ENCODE measurements at regions of chr3 and their contacts with region 1.

Region 1: GRCh38 chr3:16550676-16551341 is 37.3 kb upstream of the RFTN1 start:
- DNase-seq: peak; percentile 88
- ATAC-seq: peak; percentile 97
- H3K4me3 ChIP-seq: no peak overlapping the region
- H3K27ac ChIP-seq: no peak overlapping the region
- H3K4me1 ChIP-seq: no peaks in the 10 kb centered on the region; the same call in 1 of the 2 replicates
- H3K27me3 ChIP-seq: peaks cover 18% of the 10 kb centered on the region
- CTCF ChIP-seq: peak; percentile 98
- POLR2A ChIP-seq: no peak
- RAD21 ChIP-seq: peak; percentile 98

Region 2: GRCh38 chr3:15595955-15596354 is 954.9 kb before region 1 on chr3:
- CTCF ChIA-PET with region 1: no interaction called
- POLR2A ChIA-PET with region 1: no interaction called
- dilution Hi-C with region 1: no loop called
- in situ Hi-C with region 1: no loop called
- intact Hi-C with region 1: loop called (anchors 5 kb)
- DNase-seq: no peak
- ATAC-seq: no peak
- H3K4me3 ChIP-seq: no peak overlapping the region
- H3K27ac ChIP-seq: no peak overlapping the region
- H3K4me1 ChIP-seq: peaks cover 2% of the 10 kb centered on the region; the same call in 1 of the 2 replicates
- H3K27me3 ChIP-seq: no peaks in the 10 kb centered on the region
- CTCF ChIP-seq: no peak
- POLR2A ChIP-seq: no peak
- RAD21 ChIP-seq: no peak

Region 3: DNA sequence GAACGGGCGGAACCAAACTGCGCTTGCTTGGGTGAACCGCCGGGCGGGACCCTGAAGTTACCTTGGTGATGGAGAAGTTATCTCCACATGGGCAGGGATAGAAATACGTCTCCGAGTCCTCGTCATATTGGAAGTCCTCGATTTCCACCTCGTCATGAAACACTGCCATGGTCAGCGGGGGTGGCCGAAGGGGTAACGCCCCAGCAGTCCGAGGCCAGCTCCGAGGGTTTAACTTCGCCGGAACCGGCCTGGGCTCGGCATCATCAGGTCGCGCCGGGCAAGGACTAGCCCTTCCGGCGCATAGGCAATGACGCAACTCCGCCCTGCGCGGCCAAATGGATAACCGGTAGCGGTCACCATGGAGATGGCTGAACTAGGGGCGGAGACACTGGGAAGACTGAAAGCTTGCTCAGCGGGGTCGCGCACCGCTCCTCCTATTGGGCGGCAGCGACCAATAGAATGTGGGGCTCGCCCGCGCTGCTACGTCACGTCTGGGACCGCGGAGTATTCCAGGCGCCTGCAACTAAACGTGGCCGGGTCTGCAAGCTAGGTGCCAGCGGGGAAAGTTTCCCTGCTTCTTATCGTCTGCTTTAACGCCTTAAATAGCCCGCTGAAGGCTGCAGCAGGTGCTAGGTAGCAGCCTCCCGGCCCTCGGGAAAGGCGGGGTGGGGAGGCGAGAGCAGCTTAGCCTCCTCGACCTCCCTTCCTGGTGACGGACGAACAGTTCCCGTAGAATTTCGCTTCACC is 285.9 kb before region 1 on chr3 and contains the starts of genes DPH3 and OXNAD1:
- CTCF ChIA-PET with region 1: interaction called, 4 read pairs
- POLR2A ChIA-PET with region 1: no interaction called
- dilution Hi-C with region 1: no loop called
- in situ Hi-C with region 1: no loop called
- intact Hi-C with region 1: loop called (anchors 1 kb)
- DNase-seq: peak; percentile 100
- ATAC-seq: peak; percentile 98
- H3K4me3 ChIP-seq: peak within 1 kb of the TSS; percentile 81
- H3K27ac ChIP-seq: peak within 1 kb of the TSS; percentile 72
- H3K4me1 ChIP-seq: no peaks in the 10 kb centered on the region
- H3K27me3 ChIP-seq: no peaks in the 10 kb centered on the region
- CTCF ChIP-seq: no peak
- POLR2A ChIP-seq: peak; percentile 87
- RAD21 ChIP-seq: no peak
- total RNA-seq, gene DPH3: 32.1 and 34.4 TPM in 2 replicates
- total RNA-seq, gene OXNAD1: 11.1 and 11.3 TPM in 2 replicates

Region 4: DNA sequence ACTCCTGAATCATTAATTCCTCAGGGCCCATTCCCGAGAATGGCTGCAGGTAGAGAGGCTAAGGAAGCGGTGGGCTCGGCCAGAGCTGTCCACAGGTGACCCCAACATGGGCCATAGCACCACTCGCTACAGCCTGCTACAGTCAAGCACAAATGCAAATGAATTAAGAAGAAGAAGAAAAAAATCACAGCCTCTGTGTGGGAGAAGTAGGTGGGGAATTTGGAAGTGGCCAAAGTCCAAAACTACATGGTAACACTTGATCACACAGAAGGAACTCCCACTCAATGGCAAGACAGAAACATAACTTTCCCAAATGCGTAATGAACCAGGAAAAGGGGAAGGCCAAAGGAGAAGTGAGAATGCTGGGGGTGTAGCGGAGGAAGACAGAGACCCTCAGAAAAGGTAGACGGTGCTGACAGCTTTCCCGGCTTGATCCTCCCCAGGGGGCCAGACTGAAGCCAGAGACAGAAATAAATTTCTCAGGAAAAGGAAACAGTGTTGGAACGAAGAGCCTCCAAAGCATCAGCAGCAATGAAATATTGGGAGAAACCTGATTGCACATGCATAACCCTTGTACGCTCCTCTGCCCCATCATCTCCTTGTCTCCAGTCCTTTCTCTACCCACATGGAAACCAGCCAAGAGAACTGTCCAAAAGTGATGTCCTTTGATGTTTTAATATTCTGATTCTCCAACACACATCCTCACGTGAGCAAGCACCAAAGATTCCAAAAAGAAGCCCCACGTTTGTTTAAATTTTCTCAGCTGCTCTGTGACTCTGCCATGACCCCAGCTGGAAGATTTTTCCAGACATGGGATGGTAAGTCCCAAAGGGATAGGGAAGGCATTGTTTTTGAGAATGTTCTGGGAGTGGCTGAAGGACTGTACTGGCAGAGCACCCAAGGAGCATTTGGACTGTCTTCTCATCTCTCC is 178.2 kb before region 1 on chr3:
- CTCF ChIA-PET with region 1: interaction called, 15 read pairs
- POLR2A ChIA-PET with region 1: no interaction called
- dilution Hi-C with region 1: no loop called
- in situ Hi-C with region 1: no loop called
- intact Hi-C with region 1: no loop called
- DNase-seq: no peak
- ATAC-seq: no peak
- H3K4me3 ChIP-seq: no peak overlapping the region
- H3K27ac ChIP-seq: no peak overlapping the region
- H3K4me1 ChIP-seq: peaks cover 20% of the 10 kb centered on the region
- H3K27me3 ChIP-seq: no peaks in the 10 kb centered on the region
- CTCF ChIP-seq: no peak
- POLR2A ChIP-seq: no peak
- RAD21 ChIP-seq: no peak

Region 5: DNA sequence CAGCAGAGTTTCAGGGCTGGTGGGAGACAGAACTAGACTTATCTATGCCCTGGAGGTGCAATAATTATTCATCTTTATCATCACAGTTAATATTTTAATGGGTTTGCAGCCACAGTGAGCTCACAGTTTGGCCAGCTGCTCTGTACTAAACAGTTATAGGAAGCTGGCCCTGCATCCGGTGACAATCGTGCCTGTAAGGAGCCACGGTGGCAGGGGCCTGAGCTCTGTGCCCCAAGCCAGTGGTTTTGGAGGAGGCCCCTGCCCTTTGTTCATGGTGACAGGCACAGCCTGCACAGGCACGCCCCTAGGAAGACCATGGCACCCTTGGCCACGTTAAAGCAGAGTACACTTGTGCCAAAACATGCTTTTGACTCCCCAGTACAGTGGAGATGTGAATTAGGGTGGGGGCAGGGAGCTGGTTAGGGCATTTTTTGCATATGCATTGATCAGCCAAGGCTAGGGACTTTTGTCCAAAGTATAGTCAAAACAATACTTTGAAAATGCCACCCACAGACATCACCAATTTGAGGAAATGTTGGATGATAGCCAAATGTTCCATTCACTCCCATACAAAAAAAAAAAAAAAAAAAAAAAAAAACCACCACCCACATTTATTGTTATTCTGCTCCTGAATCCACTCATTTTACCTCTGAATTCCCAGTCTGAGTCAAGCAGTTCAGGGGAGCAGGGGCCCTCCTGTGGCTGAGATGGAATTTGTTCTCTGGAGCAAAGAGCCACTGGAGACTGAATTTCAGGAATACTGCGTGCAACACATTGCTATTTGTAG is 33.9 kb before region 1 on chr3:
- CTCF ChIA-PET with region 1: no interaction called
- POLR2A ChIA-PET with region 1: no interaction called
- dilution Hi-C with region 1: no loop called
- in situ Hi-C with region 1: no loop called
- intact Hi-C with region 1: loop called (anchors 1 kb)
- DNase-seq: peak; percentile 74
- ATAC-seq: peak; percentile 32
- H3K4me3 ChIP-seq: no peak overlapping the region
- H3K27ac ChIP-seq: peak overlapping the region; percentile 11; the same call in 1 of the 2 replicates
- H3K4me1 ChIP-seq: peaks cover 7% of the 10 kb centered on the region
- H3K27me3 ChIP-seq: peaks cover 3% of the 10 kb centered on the region; the same call in 1 of the 2 replicates
- CTCF ChIP-seq: peak; percentile 76
- POLR2A ChIP-seq: no peak
- RAD21 ChIP-seq: peak; percentile 82

Region 6: GRCh38 chr3:16704941-16705340 is 154.1 kb after region 1 on chr3:
- CTCF ChIA-PET with region 1: no interaction called
- POLR2A ChIA-PET with region 1: no interaction called
- dilution Hi-C with region 1: no loop called
- in situ Hi-C with region 1: no loop called
- intact Hi-C with region 1: no loop called
- DNase-seq: no peak
- ATAC-seq: no peak
- H3K4me3 ChIP-seq: no peak overlapping the region
- H3K27ac ChIP-seq: no peak overlapping the region
- H3K4me1 ChIP-seq: no peaks in the 10 kb centered on the region
- H3K27me3 ChIP-seq: 0 out of 2 replicates have a peak, but pooled peaks cover 4% of the 10 kb centered on the region
- CTCF ChIP-seq: no peak
- POLR2A ChIP-seq: no peak
- RAD21 ChIP-seq: no peak

Region 7: DNA sequence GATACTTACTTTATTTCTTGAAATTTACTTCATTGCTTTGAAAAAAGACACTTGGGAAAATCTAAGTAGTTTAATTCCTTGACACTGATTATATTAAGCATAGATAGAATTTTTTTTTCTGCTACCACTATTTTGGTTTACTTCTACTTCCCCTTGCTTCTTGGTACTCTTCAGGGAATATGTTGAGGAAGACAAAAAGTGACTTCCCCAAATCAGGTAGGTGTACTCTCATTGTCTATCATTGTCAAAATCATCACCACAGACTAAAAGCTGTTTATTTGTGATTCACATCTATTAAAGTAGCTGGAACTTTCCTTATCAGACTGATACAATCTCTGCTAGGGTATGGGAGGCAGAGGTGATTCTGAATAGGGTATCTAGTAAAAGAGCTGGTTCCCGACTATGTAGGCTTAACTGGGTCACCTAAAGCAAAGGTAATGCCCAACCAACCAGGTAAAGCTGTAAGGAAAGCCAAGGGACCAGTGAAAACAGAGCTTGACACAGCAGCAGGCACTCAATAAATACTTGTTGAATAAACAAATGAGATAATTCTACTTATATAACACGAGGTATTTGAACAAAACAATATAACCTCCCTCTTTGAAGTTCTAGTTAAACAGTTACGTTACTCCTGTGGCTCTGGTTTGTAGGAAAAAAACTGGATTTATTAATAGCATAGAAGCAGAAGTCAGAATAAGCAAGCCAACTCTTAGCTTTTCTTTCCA is 680.9 kb after region 1 on chr3:
- CTCF ChIA-PET with region 1: no interaction called
- POLR2A ChIA-PET with region 1: no interaction called
- dilution Hi-C with region 1: no loop called
- in situ Hi-C with region 1: no loop called
- intact Hi-C with region 1: no loop called
- DNase-seq: no peak
- ATAC-seq: no peak
- H3K4me3 ChIP-seq: no peak overlapping the region
- H3K27ac ChIP-seq: no peak overlapping the region
- H3K4me1 ChIP-seq: no peaks in the 10 kb centered on the region
- H3K27me3 ChIP-seq: no peaks in the 10 kb centered on the region
- CTCF ChIP-seq: no peak
- POLR2A ChIP-seq: no peak
- RAD21 ChIP-seq: no peak

Measured in IMR-90 (cell line).